Right ventricle myocardium inferior (tissue), 1 donor: ENCODE measurements at regions of chr7 and their contacts with region 1.

Region 1: GRCh38 chr7:75914730-75915585 is at the start of gene POR:
- DNase-seq: peak; percentile 98
- ATAC-seq: peak; percentile 100
- total RNA-seq, gene POR: 66.3 TPM

Region 2: DNA sequence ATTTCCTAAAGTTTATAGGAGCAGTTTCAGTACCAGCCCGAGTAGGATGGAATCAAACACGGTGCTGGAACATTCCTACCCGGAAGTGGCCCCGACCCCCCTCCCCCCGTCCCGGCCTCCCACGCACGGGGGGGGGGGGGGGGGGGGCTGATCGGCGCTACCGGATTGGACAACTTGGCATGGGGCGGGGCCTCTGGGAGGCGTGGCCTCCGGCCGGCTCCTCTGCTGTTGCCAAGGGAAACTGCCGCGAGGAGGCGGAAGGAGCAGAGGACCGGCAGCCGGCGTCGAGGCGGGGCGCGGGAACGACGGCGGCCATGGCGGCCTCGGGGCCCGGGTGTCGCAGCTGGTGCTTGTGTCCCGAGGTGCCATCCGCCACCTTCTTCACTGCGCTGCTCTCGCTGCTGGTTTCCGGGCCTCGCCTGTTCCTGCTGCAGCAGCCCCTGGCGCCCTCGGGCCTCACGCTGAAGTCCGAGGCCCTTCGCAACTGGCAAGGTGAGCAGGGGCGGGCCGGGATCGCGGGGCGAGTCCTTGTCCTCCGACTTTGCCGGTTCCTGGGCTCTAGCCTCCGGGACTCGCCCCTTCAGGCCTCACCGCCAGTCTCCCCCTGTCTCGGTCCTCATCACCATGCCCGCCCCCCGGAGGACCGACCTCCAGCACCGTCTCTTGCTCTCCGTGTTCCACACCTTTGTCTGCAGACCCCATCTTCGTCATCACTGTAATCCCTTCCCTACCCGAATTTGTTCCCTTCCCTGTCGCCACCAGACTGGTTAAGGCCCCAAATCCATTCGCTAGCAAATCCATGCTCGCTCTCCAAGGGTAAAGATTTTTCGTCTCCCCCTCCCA is 36.0 kb before region 1 on chr7 and contains the start of gene RHBDD2:
- intact Hi-C with region 1: loop called (anchors 2 kb)
- DNase-seq: peak; percentile 98
- ATAC-seq: peak; percentile 98
- total RNA-seq, gene RHBDD2: 16.7 TPM

Region 3: GRCh38 chr7:75966190-75966961 is 51.4 kb after region 1 on chr7:
- intact Hi-C with region 1: loop called (anchors 5 kb)
- DNase-seq: peak; percentile 78
- ATAC-seq: peak; percentile 88